ENCODE measurements at regions of chr2 and their contacts with region 1.

Region 1: DNA sequence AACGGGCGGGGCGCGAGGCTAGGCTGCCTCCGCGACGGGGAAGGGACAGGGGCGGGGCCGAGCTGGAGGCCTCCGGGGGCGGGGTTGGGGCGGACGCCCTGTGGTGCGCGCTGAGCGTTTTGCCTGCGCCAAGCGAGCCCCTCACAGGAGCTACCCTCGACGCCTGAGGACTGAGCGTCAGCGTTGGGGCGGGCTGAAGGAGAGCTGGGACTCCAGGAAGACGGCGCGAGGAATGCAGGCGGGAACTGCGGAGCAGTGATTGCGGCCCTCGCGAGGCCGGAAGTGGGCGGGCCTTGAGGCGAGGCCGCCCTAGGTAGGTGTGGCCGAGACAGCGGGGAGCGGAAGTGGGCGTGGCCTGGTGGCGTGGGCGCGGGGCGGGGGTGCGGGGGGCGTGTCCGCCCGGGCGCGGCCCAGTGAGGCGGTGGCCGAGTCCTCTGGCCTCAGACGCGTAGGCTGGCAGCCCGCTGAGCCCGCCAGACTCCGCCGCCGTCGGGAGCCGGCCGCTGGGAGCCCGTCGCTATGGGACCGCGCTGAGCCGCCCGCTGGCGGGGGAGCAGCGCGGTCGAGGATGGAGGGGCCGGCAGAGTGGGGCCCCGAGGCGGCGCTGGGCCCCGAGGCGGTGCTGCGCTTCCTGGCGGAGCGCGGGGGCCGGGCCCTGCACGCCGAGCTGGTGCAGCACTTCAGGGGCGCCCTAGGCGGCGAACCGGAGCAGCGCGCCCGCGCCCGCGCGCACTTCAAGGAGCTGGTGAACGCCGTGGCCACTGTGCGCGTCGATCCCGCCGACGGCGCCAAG is at the starts of genes SEPTIN10 and SOWAHC:
- DNase-seq: peak; percentile 98
- ATAC-seq: peak; percentile 98
- total RNA-seq, gene SEPTIN10: 56.2 TPM
- total RNA-seq, gene SOWAHC: 2.5 TPM

Region 2: DNA sequence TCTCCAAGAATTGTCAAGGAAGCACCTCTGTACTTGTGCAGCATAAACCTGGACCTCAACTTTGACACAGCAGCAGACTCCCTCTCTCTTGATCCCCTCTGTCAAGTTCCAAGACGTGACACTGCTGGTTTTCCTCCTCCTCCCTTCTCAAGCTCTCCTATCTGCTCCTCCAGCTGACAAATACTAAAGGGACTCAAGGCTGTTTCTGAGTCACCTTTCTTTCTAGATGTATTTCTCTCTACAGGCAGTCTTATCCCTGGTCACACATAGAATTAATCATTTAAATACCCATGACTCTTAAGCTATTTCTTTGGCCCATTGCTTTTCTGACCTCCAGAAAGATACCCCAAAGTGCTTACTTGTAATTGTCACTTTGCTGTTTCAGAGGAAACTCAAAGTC is 53.9 kb before region 1 on chr2:
- intact Hi-C with region 1: loop called (anchors 5 kb)
- DNase-seq: no peak
- ATAC-seq: no peak

Region 3: GRCh38 chr2:109663721-109664120 is 49.6 kb after region 1 on chr2:
- intact Hi-C with region 1: no loop called
- DNase-seq: no peak
- ATAC-seq: peak; percentile 88

Region 4: GRCh38 chr2:109690822-109691547 is 76.9 kb after region 1 on chr2:
- intact Hi-C with region 1: loop called (anchors 2 kb)
- DNase-seq: no peak
- ATAC-seq: peak; percentile 88